ENCODE measurements at regions of chr5 and their contacts with region 1.

Region 1: GRCh38 chr5:60699530-60700382 is at the start of gene DEPDC1B:
- DNase-seq: peak; percentile 50
- ATAC-seq: peak; percentile 95
- H3K4me3 ChIP-seq: peak within 1 kb of the TSS; percentile 94
- H3K27ac ChIP-seq: peak within 1 kb of the TSS; percentile 89
- H3K4me1 ChIP-seq: no peaks in the 10 kb centered on the region
- H3K27me3 ChIP-seq: no peaks in the 10 kb centered on the region
- CTCF ChIP-seq: peak; percentile 28 to 37 (median 33); a peak in 5 of 6 replicates
- EP300 ChIP-seq: no peak
- POLR2A ChIP-seq: peak; percentile 93
- RAD21 ChIP-seq: no peak
- polyA plus RNA-seq, gene DEPDC1B: 29.7 to 30.1 TPM

Region 2: DNA sequence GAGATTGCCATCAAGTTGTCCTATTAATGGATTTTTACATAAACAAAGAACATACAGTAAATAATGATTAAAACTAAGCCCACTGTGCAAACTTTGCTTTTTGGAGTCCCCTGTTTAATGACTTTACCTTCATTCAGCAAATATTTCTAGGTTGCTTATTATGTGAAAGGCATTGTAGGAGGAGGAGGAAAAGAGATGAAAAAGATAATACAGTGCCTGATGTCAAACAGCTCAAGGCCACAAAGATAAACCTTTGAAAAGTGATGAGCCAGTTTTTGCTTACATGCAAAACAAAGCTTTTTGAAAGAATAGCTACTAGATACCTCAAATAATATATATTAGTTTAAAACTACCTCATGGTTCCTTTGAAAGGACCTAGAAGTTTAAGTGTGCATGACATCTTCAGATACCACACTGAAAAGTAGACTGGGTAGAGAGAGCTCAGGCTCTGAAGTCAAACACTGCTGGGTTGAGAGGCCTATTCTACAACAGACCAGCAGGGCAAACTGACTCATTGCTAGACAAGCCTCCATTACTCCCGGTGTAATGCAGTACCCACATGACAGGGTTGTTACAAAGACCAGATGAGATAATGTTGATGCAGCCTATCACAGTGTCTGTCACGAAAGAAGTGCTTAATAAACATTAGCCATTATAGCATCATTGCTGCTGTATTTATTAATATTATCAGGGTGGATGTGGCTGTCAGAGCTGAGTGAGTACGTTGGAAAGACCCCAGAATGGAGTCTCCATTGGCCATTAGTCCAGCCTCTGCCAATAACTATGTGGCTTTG is 11.6 kb before region 1 on chr5:
- CTCF ChIA-PET with region 1: interaction called, 99 read pairs
- POLR2A ChIA-PET with region 1: interaction called, 8 read pairs
- RAD21 ChIA-PET with region 1: interaction called, 7 read pairs
- SMC1A ChIA-PET with region 1: interaction called, 19 read pairs
- in situ Hi-C with region 1: no loop called
- intact Hi-C with region 1: no loop called
- DNase-seq: no peak
- ATAC-seq: peak; percentile 98
- H3K4me3 ChIP-seq: no peak overlapping the region
- H3K27ac ChIP-seq: no peak overlapping the region
- H3K4me1 ChIP-seq: no peaks in the 10 kb centered on the region
- H3K27me3 ChIP-seq: no peaks in the 10 kb centered on the region
- CTCF ChIP-seq: peak; percentile 2 to 49 (median 45); a peak in 3 of 6 replicates
- EP300 ChIP-seq: no peak
- POLR2A ChIP-seq: no peak
- RAD21 ChIP-seq: no peak

Region 3: GRCh38 chr5:60822285-60822556 is 122.5 kb after region 1 on chr5:
- CTCF ChIA-PET with region 1: interaction called, 4 read pairs
- POLR2A ChIA-PET with region 1: no interaction called
- RAD21 ChIA-PET with region 1: no interaction called
- SMC1A ChIA-PET with region 1: interaction called, 3 read pairs
- in situ Hi-C with region 1: no loop called
- intact Hi-C with region 1: loop called (anchors 5 kb)
- DNase-seq: peak; percentile 20
- ATAC-seq: peak; percentile 58
- H3K4me3 ChIP-seq: no peak overlapping the region
- H3K27ac ChIP-seq: no peak overlapping the region
- H3K4me1 ChIP-seq: peaks cover 46% of the 10 kb centered on the region
- H3K27me3 ChIP-seq: no peaks in the 10 kb centered on the region
- CTCF ChIP-seq: no peak
- EP300 ChIP-seq: no peak
- POLR2A ChIP-seq: no peak
- RAD21 ChIP-seq: no peak

Region 4: DNA sequence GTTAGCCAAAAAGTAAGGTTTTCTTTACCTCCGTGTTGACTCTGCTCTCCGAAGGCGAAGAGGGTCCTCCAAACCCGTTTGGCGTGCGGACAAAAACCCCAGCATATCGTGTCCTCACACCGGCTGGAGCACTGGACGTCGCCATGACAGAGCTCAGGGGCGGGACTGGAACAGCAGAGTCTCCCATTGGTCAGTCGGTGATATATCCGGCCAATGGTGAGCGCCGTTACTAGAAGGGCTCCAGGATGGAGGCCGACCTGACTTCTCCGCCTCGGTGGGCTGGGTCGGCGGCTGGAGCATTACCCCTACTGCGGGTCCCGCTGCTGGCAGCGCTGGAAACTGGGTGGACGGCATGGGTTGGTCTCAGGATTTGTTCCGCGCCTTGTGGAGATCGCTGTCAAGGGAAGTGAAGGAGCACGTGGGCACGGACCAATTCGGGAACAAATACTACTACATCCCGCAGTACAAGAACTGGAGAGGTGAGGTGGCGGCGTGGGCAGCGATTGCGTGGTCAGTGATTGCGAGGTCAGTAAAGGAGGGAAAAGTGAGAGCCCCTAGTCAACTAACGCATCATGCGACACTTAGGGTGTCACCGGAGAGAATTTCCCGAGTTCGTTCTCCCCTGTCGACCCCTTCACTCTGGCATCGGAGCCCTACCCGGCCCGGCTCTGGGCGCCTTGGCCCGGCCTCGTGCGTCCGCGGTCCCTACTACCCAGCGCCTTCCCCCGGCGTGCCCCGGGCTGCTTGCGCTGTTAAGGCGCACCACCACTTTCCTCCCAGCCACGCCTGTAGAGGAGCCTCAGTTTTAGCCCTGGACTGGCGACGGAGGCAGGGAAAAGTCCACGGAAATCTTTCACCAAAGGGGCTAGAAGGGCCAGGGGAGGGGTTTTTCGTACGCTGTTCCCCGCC is 245.4 kb after region 1 on chr5 and contains the starts of genes ERCC8 and NDUFAF2:
- CTCF ChIA-PET with region 1: no interaction called
- POLR2A ChIA-PET with region 1: no interaction called
- RAD21 ChIA-PET with region 1: no interaction called
- SMC1A ChIA-PET with region 1: no interaction called
- in situ Hi-C with region 1: loop called (anchors 25 kb)
- intact Hi-C with region 1: loop called (anchors 5 kb)
- DNase-seq: peak; percentile 73
- ATAC-seq: peak; percentile 98
- H3K4me3 ChIP-seq: peak within 1 kb of the TSS; percentile 98
- H3K27ac ChIP-seq: peak within 1 kb of the TSS; percentile 83
- H3K4me1 ChIP-seq: no peaks in the 10 kb centered on the region
- H3K27me3 ChIP-seq: no peaks in the 10 kb centered on the region
- CTCF ChIP-seq: no peak
- EP300 ChIP-seq: no peak
- POLR2A ChIP-seq: peak; percentile 78
- RAD21 ChIP-seq: no peak
- polyA plus RNA-seq, gene ERCC8: 16.8 to 31.2 TPM
- polyA plus RNA-seq, gene NDUFAF2: 111 to 121 TPM